ENCODE measurements at regions of chr1 and their contacts with region 1.

Region 1: DNA sequence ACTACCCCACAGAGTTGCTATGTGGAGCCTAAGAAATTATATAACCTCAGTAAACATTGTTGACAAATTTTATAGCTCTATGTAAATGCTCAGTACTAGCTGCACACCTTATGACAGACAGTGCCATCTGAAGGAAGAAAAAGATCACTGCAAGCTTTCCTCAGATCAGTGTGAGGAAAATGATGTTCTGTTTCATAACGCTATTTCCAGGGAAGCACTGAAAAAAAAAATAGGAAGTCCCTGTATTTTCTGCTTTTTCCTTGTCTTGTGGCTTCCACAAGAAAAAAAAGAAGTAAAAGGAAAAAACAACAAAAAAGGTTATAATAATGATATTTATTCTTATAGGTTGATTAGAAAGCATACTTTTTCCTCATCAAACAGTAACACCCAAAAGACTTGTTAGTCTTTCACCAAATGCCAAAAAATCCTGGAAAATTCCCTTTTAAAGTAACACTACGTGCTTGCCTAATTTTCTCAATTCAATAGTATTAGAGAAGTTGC is 23.2 kb downstream of the LYST start:
- DNase-seq: no peak
- H3K4me3 ChIP-seq: no peak overlapping the region
- H3K27ac ChIP-seq: no peak overlapping the region
- H3K4me1 ChIP-seq: peaks cover 4 to 39% (median 12%) of the 10 kb centered on the region in 3 donors
- H3K27me3 ChIP-seq: no peaks in the 10 kb centered on the region
- CTCF ChIP-seq: peak in 4 of 6 experiments; percentile 10 to 50 (median 43)
- POLR2A ChIP-seq: no peak

Region 2: GRCh38 chr1:235739124-235739523 is 104.4 kb before region 1 on chr1:
- intact Hi-C with region 1: no loop called
- DNase-seq: no peak
- H3K4me3 ChIP-seq: no peak overlapping the region
- H3K27ac ChIP-seq: no peak overlapping the region
- H3K4me1 ChIP-seq: no peaks in the 10 kb centered on the region
- H3K27me3 ChIP-seq: no peaks in the 10 kb centered on the region
- CTCF ChIP-seq: no peak
- POLR2A ChIP-seq: no peak

Region 3: GRCh38 chr1:235954306-235955283 is 111.1 kb after region 1 on chr1:
- intact Hi-C with region 1: loop called (anchors 10 kb)
- DNase-seq: peak; percentile 30
- H3K4me3 ChIP-seq: no peak overlapping the region
- H3K27ac ChIP-seq: no peak overlapping the region
- H3K4me1 ChIP-seq: peaks cover 0 to 6% (median 0%) of the 10 kb centered on the region in 3 donors
- H3K27me3 ChIP-seq: no peaks in the 10 kb centered on the region
- CTCF ChIP-seq: no peak
- POLR2A ChIP-seq: no peak